Dendritic cell treated with granulocyte-macrophage colony-stimulating factor and Interleukin-4, amounts not matched to agents 40 ng/mL and 50 ng/mL, for 4 days (primary cell): ENCODE measurements at regions of chr15 and their contacts with region 1.

Region 1: DNA sequence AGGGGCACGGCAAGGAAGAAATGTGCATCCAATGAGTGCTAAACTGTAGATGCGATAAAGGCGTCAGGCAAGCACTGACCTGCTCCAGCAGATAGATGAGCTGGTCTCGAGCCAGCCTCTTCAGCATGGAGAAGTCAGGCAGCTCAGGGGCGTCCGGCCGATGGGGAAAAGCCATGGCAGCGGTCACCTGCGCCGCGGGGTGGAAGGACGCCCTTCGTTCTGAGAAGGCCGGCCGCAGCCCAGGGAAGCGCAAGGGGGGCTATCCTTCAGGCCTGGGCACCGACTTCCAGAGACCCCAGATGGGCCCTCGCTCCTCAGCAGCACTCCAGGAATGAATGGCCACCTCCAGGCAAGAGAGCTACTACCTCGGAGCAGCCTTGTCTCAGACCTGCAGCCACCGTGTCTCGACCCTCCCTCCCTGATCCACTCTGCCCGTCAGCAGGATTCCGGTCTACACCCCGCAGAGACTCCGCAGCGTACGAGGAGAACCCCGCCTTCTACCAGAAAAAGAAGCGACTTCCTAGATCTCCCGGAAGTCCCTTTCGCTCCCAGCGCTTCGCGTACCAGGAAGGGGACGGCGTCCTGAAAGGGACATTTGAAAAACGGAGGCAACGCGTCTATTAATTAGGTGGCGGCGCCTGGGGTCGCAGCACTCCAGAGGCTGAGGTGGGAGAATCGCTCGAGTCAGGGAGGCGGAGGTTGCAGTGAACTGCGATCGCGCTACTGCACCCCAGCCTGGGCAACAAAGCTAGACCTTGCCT is at the start of gene VPS33B:
- H3K4me3 Mint-ChIP-seq: peak within 1 kb of the TSS; percentile 92
- H3K27ac Mint-ChIP-seq: peak within 1 kb of the TSS; percentile 96
- H3K4me1 Mint-ChIP-seq: peaks cover 36% of the 10 kb centered on the region
- H3K27me3 Mint-ChIP-seq: no peaks in the 10 kb centered on the region

Region 2: GRCh38 chr15:90994417-90995311 is 27.6 kb before region 1 on chr15 and contains the start of gene PRC1:
- intact Hi-C with region 1: loop called (anchors 1 kb)
- H3K4me3 Mint-ChIP-seq: peak within 1 kb of the TSS; percentile 100
- H3K27ac Mint-ChIP-seq: peak within 1 kb of the TSS; percentile 96
- H3K4me1 Mint-ChIP-seq: peaks cover 13% of the 10 kb centered on the region
- H3K27me3 Mint-ChIP-seq: no peaks in the 10 kb centered on the region

Region 3: GRCh38 chr15:91320101-91320500 is 297.8 kb after region 1 on chr15:
- intact Hi-C with region 1: no loop called
- H3K4me3 Mint-ChIP-seq: no peak overlapping the region
- H3K27ac Mint-ChIP-seq: no peak overlapping the region
- H3K4me1 Mint-ChIP-seq: no peaks in the 10 kb centered on the region
- H3K27me3 Mint-ChIP-seq: peaks cover 2% of the 10 kb centered on the region

Region 4: GRCh38 chr15:92763459-92763858 is 1741.2 kb after region 1 on chr15:
- intact Hi-C with region 1: no loop called
- H3K4me3 Mint-ChIP-seq: no peak overlapping the region
- H3K27ac Mint-ChIP-seq: no peak overlapping the region
- H3K4me1 Mint-ChIP-seq: no peaks in the 10 kb centered on the region
- H3K27me3 Mint-ChIP-seq: no peaks in the 10 kb centered on the region